ENCODE measurements at regions of chr5 and their contacts with region 1.

Region 1: DNA sequence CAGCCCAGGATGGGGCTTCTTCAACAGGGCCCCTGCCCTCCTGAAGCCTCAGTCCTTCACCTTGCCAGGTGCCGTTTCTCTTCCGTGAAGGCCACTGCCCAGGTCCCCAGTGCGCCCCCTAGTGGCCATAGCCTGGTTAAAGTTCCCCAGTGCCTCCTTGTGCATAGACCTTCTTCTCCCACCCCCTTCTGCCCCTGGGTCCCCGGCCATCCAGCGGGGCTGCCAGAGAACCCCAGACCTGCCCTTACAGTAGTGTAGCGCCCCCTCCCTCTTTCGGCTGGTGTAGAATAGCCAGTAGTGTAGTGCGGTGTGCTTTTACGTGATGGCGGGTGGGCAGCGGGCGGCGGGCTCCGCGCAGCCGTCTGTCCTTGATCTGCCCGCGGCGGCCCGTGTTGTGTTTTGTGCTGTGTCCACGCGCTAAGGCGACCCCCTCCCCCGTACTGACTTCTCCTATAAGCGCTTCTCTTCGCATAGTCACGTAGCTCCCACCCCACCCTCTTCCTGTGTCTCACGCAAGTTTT is 23.6 kb downstream of the PCDHGC5 start:
- DNase-seq: peak; percentile 83
- H3K4me3 Mint-ChIP-seq: peak overlapping the region; percentile 61
- H3K27ac Mint-ChIP-seq: peak overlapping the region; percentile 61
- H3K4me1 Mint-ChIP-seq: peaks cover 27% of the 10 kb centered on the region
- H3K27me3 Mint-ChIP-seq: no peaks in the 10 kb centered on the region

Region 2: DNA sequence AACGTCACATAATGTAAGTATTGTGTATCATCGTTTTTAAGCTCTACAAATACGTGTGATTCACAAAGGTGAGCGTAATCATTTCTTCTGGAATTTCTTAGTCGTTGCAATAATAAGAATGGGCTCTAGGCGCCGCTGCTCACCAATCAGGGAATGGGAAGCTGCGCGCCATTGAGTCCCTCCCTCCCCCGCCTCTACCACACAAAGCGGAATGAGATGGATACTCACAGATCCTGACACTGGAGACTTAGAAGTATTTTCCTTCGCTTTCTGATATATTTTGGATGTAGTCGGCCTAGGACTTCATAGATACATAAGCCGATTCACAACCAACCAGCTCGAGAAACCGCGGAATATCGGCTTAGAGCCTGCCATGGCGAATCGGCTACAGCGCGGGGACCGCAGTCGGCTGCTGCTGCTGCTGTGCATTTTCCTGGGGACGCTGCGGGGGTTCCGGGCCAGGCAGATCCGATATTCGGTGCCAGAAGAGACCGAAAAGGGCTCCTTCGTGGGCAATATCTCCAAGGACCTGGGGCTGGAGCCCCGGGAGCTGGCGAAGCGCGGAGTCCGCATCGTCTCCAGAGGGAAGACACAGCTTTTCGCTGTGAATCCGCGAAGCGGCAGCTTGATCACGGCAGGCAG is 91.5 kb before region 1 on chr5 and contains the start of gene PCDHGA11:
- CTCF ChIA-PET with region 1: interaction called, 14 read pairs
- POLR2A ChIA-PET with region 1: no interaction called
- DNase-seq: peak; percentile 38
- H3K4me3 Mint-ChIP-seq: peak within 1 kb of the TSS; percentile 66
- H3K27ac Mint-ChIP-seq: peak within 1 kb of the TSS; percentile 73
- H3K4me1 Mint-ChIP-seq: peaks cover 8% of the 10 kb centered on the region
- H3K27me3 Mint-ChIP-seq: peaks cover 67% of the 10 kb centered on the region
- total RNA-seq, gene PCDHGA11: not detected

Region 3: GRCh38 chr5:141492168-141492885 is 20.1 kb before region 1 on chr5:
- CTCF ChIA-PET with region 1: interaction called, 13 read pairs
- POLR2A ChIA-PET with region 1: no interaction called
- DNase-seq: no peak
- H3K4me3 Mint-ChIP-seq: peak overlapping the region; percentile 36
- H3K27ac Mint-ChIP-seq: peak overlapping the region; percentile 60
- H3K4me1 Mint-ChIP-seq: peaks cover 6% of the 10 kb centered on the region
- H3K27me3 Mint-ChIP-seq: peaks cover 69% of the 10 kb centered on the region

Region 4: DNA sequence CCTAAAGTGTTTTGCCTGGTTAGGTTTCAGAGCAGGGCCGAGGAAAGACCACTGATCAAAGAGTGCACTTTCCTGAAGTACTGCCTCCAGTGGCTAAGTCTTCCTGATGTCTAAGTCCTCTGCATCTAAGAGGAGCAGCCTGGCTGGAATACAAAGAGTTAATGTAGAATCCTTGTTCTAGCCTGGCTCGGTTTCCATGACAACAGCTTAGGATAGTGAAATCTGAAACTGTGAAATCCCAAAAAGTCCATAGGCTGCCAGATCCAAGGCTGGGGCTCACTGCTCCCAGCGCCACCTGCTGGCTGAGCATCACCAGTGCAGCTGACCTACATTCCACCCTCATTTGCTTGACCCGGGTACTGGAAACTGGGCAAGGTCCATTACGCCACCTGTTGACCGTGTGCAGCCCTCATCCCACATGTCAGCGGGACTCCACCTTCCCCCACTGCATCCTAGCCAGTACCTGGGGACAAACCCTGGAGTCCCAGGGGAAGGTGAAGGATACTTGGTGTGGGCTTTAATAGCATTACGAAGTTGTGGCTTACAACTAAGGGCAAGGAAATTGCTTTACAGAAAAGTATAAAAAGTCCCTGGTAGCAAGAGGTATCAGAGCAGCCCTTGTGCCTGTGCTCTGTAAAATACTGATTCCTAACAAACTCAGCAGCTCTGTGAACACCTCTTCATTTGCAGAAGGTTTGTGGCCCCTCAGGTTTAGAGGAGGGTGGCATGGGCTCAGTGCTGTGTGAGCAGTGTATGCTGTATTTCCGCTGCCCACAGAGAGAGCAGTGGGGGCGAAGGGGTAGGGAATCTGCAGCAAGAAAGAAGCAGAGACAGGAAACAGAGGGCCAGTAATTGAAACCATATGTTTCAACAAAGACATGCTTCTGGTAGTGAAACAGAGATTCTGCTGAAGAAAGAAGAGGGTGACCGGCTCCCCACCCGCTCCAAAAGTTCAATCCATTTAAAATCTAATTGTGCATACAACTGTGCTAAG is 12.5 kb after region 1 on chr5:
- CTCF ChIA-PET with region 1: interaction called, 28 read pairs
- POLR2A ChIA-PET with region 1: no interaction called
- DNase-seq: peak; percentile 41
- H3K4me3 Mint-ChIP-seq: no peak overlapping the region
- H3K27ac Mint-ChIP-seq: no peak overlapping the region
- H3K4me1 Mint-ChIP-seq: peaks cover 22% of the 10 kb centered on the region
- H3K27me3 Mint-ChIP-seq: no peaks in the 10 kb centered on the region

Region 5: GRCh38 chr5:141628175-141628788 is 115.8 kb after region 1 on chr5:
- CTCF ChIA-PET with region 1: no interaction called
- POLR2A ChIA-PET with region 1: no interaction called
- DNase-seq: no peak
- H3K4me3 Mint-ChIP-seq: no peak overlapping the region
- H3K27ac Mint-ChIP-seq: no peak overlapping the region
- H3K4me1 Mint-ChIP-seq: peaks cover 16% of the 10 kb centered on the region
- H3K27me3 Mint-ChIP-seq: no peaks in the 10 kb centered on the region

Measured in activated CD4-positive, alpha-beta T cell treated with anti-CD3 and anti-CD28 coated beads, Interleukin-2, amount 10 ng/mL, durations not matched to agents 7 days and 5 days (primary cell).